ENCODE measurements at regions of chr7 and their contacts with region 1.

Region 1: GRCh38 chr7:91940572-91941341 is at the start of gene AKAP9:
- DNase-seq: peak; percentile 88 to 90
- ATAC-seq: peak; percentile 81 to 87
- H3K4me3 ChIP-seq: peak within 1 kb of the TSS; percentile 76 to 98 (median 92)
- H3K27ac ChIP-seq: peak within 1 kb of the TSS; percentile 95 to 100 (median 98)
- H3K4me1 ChIP-seq: peaks cover 36 to 40% of the 10 kb centered on the region in 2 donors
- H3K27me3 ChIP-seq: no peaks in the 10 kb centered on the region
- CTCF ChIP-seq: peak in 1 of 5 experiments; percentile 3
- POLR2A ChIP-seq: peak; percentile 70 to 83
- total RNA-seq, gene AKAP9: 25.4 to 80.0 (median 40.6) TPM

Region 2: GRCh38 chr7:90825779-90826178 is 1115.0 kb before region 1 on chr7:
- in situ Hi-C with region 1: no loop called
- intact Hi-C with region 1: no loop called
- DNase-seq: no peak
- ATAC-seq: no peak
- H3K4me3 ChIP-seq: no peak overlapping the region
- H3K27ac ChIP-seq: no peak overlapping the region
- H3K4me1 ChIP-seq: peaks cover 0 to 8% of the 10 kb centered on the region in 2 donors
- H3K27me3 ChIP-seq: no peaks in the 10 kb centered on the region
- CTCF ChIP-seq: no peak
- POLR2A ChIP-seq: no peak

Region 3: GRCh38 chr7:91653286-91653685 is 287.5 kb before region 1 on chr7:
- in situ Hi-C with region 1: no loop called
- intact Hi-C with region 1: no loop called
- DNase-seq: no peak
- ATAC-seq: no peak
- H3K4me3 ChIP-seq: no peak overlapping the region
- H3K27ac ChIP-seq: no peak overlapping the region
- H3K4me1 ChIP-seq: no peaks in the 10 kb centered on the region
- H3K27me3 ChIP-seq: no peaks in the 10 kb centered on the region
- CTCF ChIP-seq: no peak
- POLR2A ChIP-seq: no peak

Region 4: GRCh38 chr7:91880413-91881241 is 60.1 kb before region 1 on chr7 and contains the start of gene MTERF1:
- in situ Hi-C with region 1: no loop called
- intact Hi-C with region 1: loop called (anchors 2 kb)
- DNase-seq: peak; percentile 63 to 81
- ATAC-seq: peak; percentile 88 to 98
- H3K4me3 ChIP-seq: peak within 1 kb of the TSS; percentile 66 to 80 (median 76)
- H3K27ac ChIP-seq: peak within 1 kb of the TSS in 3 of 4 donors; percentile 16 to 59 (median 40)
- H3K4me1 ChIP-seq: peaks cover 0 to 11% of the 10 kb centered on the region in 2 donors
- H3K27me3 ChIP-seq: no peaks in the 10 kb centered on the region
- CTCF ChIP-seq: peak; percentile 85 to 94 (median 87)
- POLR2A ChIP-seq: no peak
- total RNA-seq, gene MTERF1: 3.3 to 5.5 (median 3.7) TPM

Region 5: DNA sequence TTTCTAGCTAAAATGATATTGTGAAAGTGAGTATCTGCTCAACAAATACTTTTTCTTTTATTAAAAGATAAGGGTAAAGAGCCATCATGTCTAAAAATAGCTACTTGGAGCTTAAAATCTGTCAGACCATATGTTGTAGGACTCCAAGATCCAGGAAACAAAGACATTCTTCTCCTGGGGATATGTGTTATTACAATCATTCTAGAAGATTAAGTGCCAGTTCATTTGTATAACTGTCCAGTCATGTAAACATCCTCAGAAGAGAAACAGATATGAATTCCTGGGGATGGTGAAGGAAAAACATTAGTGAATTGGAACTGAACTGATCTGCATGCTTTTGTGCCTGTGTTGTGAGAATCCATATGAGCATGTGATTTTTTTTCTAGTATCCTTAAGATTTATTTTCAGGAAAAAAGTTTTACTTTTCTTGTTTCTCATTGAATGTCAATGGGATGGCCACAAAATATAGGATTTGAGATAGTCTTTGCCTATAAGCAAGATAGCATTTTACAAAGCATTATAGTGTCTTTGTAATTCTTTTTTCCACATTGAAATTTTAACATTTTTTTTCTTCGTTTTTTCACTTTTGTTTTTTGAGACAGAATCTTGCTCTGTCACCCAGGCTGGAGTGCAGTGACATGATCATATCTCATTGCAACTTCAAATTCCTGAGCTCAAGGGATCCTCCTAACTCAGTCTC is 45.8 kb before region 1 on chr7:
- in situ Hi-C with region 1: no loop called
- intact Hi-C with region 1: no loop called
- DNase-seq: no peak
- ATAC-seq: no peak
- H3K4me3 ChIP-seq: no peak overlapping the region
- H3K27ac ChIP-seq: no peak overlapping the region
- H3K4me1 ChIP-seq: no peaks in the 10 kb centered on the region
- H3K27me3 ChIP-seq: no peaks in the 10 kb centered on the region
- CTCF ChIP-seq: no peak
- POLR2A ChIP-seq: no peak

Region 6: DNA sequence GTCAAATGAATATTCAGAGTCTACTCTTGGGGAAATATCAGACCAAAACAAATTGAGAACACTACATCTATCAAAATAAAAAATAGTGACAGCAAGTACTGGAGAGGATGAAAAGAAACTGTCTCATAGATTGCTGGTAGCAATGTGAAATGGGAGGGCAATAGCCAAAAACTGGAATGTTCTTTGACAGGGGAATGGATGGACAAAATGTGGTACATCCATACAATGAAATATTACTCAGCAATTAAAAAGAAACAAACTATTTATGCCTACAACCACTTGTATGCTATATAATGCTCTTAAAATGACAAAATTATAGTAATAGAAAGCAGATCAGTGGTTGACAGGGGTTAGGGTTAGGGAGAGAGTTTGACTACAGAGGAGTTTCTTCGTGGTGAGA is 147.5 kb after region 1 on chr7:
- in situ Hi-C with region 1: no loop called
- intact Hi-C with region 1: no loop called
- DNase-seq: no peak
- ATAC-seq: no peak
- H3K4me3 ChIP-seq: no peak overlapping the region
- H3K27ac ChIP-seq: no peak overlapping the region
- H3K4me1 ChIP-seq: no peaks in the 10 kb centered on the region
- H3K27me3 ChIP-seq: no peaks in the 10 kb centered on the region
- CTCF ChIP-seq: no peak
- POLR2A ChIP-seq: no peak

Region 7: GRCh38 chr7:92121681-92122080 is 180.9 kb after region 1 on chr7:
- in situ Hi-C with region 1: no loop called
- intact Hi-C with region 1: loop called (anchors 10 kb)
- DNase-seq: no peak
- ATAC-seq: no peak
- H3K4me3 ChIP-seq: no peak overlapping the region
- H3K27ac ChIP-seq: no peak overlapping the region
- H3K4me1 ChIP-seq: no peaks in the 10 kb centered on the region
- H3K27me3 ChIP-seq: no peaks in the 10 kb centered on the region
- CTCF ChIP-seq: no peak
- POLR2A ChIP-seq: no peak

Region 8: GRCh38 chr7:92245487-92246362 is 305.0 kb after region 1 on chr7 and contains the starts of genes ANKIB1 and KRIT1:
- in situ Hi-C with region 1: no loop called
- intact Hi-C with region 1: loop called (anchors 10 kb)
- DNase-seq: peak; percentile 83 to 84
- ATAC-seq: peak; percentile 94 to 97
- H3K4me3 ChIP-seq: peak within 1 kb of the TSS; percentile 81 to 98 (median 84)
- H3K27ac ChIP-seq: peak within 1 kb of the TSS; percentile 86 to 98 (median 94)
- H3K4me1 ChIP-seq: peaks cover 28 to 38% of the 10 kb centered on the region in 2 donors
- H3K27me3 ChIP-seq: no peaks in the 10 kb centered on the region
- CTCF ChIP-seq: peak in 2 of 5 experiments; percentile 26 to 33
- POLR2A ChIP-seq: peak; percentile 39 to 56
- total RNA-seq, gene ANKIB1: 11.5 to 24.2 (median 12.5) TPM
- total RNA-seq, gene KRIT1: 28.7 to 47.6 (median 32.5) TPM

Measured in gastrocnemius medialis (tissue), 4 donors.